MCF 10A (cell line): ENCODE measurements at regions of chr17 and their contacts with region 1.

Region 1: DNA sequence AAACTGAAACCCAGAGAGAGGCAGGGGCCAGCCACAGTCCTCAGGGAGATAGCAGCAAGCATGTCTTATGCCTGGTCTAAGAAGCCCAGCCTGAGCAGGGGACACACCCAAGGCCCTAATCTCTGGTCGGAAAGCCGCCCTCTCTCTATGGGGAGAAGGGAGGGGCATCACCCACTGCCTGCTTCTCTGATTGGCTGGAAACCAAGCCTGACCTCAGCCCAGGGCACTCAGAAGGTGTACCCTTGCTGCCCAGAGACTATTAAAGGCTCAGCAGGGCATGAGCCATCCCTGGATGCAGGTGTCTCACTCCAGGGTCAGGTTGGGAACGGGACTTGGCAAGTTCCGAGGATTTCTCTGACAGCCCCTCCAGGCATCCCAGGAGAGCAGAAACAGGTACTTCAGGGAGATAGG is 5.7 kb upstream of the KRT13 start:
- DNase-seq: no peak
- H3K4me3 Mint-ChIP-seq: no peak overlapping the region
- H3K27ac Mint-ChIP-seq: no peak overlapping the region
- H3K4me1 Mint-ChIP-seq: peaks cover 13% of the 10 kb centered on the region
- H3K27me3 Mint-ChIP-seq: no peaks in the 10 kb centered on the region
- CTCF ChIP-seq: no peak

Region 2: GRCh38 chr17:41456208-41456607 is 54.9 kb before region 1 on chr17:
- CTCF ChIA-PET with region 1: no interaction called
- POLR2A ChIA-PET with region 1: no interaction called
- intact Hi-C with region 1: no loop called
- DNase-seq: peak; percentile 27
- H3K4me3 Mint-ChIP-seq: no peak overlapping the region
- H3K27ac Mint-ChIP-seq: no peak overlapping the region
- H3K4me1 Mint-ChIP-seq: peaks cover 6% of the 10 kb centered on the region
- H3K27me3 Mint-ChIP-seq: peaks cover 55% of the 10 kb centered on the region
- CTCF ChIP-seq: no peak

Region 3: GRCh38 chr17:41567317-41567716 is 56.2 kb after region 1 on chr17:
- CTCF ChIA-PET with region 1: no interaction called
- POLR2A ChIA-PET with region 1: no interaction called
- intact Hi-C with region 1: no loop called
- DNase-seq: no peak
- H3K4me3 Mint-ChIP-seq: no peak overlapping the region
- H3K27ac Mint-ChIP-seq: no peak overlapping the region
- H3K4me1 Mint-ChIP-seq: no peaks in the 10 kb centered on the region
- H3K27me3 Mint-ChIP-seq: peaks cover 34% of the 10 kb centered on the region
- CTCF ChIP-seq: no peak

Region 4: GRCh38 chr17:41655611-41656351 is 144.6 kb after region 1 on chr17:
- CTCF ChIA-PET with region 1: no interaction called
- POLR2A ChIA-PET with region 1: interaction called, 11 read pairs
- intact Hi-C with region 1: no loop called
- DNase-seq: peak; percentile 98
- H3K4me3 Mint-ChIP-seq: peak overlapping the region; percentile 69
- H3K27ac Mint-ChIP-seq: no peak overlapping the region
- H3K4me1 Mint-ChIP-seq: peaks cover 68% of the 10 kb centered on the region
- H3K27me3 Mint-ChIP-seq: no peaks in the 10 kb centered on the region
- CTCF ChIP-seq: no peak